Activated CD4-positive, alpha-beta T cell treated with anti-CD3 and anti-CD28 coated beads for 36 hours (primary cell): ENCODE measurements at regions of chr1 and their contacts with region 1.

Region 1: DNA sequence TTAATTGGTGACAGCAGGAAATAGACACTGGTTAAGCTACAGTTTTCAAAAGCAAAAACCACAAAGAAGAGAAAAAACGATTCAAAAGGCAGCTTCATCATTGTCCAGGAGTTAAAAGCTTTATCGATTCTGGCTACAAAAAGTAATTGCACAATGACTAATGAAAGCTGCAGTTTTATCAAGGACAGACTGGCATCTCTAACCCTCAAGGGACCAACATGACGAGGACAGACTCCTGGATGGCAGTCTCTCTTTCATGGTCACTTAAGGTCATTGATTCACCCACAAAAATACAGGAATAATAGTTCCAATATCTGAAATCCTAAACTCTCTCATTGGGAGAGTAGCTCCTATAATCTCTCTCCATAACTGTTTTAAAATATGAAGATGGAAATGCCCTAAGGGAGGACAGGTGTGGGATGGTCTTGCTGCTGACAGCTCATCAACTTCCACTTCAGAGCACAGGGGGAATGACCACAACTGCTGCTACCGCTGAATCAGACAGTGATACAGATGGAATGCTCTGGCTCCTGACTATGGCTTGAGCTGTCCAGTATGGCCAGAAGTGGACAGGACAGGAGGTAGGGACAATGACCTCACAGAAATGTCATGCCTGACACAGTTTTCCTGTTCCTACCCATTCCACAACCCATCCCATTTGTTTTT is 17.4 kb upstream of the CPLANE2 start:
- DNase-seq: no peak
- ATAC-seq: no peak
- H3K4me3 Mint-ChIP-seq: no peak overlapping the region
- H3K27ac Mint-ChIP-seq: no peak overlapping the region
- H3K4me1 Mint-ChIP-seq: peaks cover 12% of the 10 kb centered on the region
- H3K27me3 Mint-ChIP-seq: no peaks in the 10 kb centered on the region

Region 2: DNA sequence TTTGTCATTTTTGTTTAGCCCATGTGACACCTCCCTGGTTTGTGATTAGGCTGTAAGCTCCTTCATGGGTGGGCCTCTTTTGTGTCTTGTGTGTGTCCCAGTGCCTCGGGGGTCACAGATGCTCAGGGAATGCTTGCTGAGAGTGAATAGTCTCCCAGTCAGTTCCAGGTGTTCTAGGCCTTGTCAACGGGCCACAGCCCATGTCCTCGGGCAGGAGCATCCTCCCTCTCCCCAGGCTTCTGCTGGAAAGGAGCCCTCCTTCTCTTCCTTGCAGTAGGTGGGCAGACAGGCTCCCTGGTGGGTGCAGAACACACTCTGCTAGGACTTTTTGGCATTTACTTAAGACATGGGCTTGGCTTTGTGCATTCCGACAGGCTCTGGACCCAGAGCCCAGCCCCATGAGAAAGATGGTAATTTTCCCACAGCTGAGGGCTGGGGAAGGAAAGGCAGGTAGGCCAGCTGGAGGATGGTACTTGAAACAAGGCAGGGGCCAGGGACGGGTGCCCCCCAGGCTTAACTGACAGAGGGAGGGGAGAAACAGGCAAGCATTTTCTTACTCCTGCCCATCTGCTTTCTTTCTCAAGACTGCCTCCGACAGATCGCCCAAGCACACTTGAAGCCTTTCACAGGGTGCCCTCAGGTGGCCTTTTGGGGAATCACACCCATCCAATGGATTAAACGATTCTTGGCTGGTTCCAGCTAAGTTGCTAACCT is 10.3 kb before region 1 on chr1:
- CTCF ChIA-PET with region 1: interaction called, 14 read pairs
- POLR2A ChIA-PET with region 1: no interaction called
- intact Hi-C with region 1: no loop called
- DNase-seq: peak; percentile 87
- ATAC-seq: peak; percentile 79
- H3K4me3 Mint-ChIP-seq: no peak overlapping the region
- H3K27ac Mint-ChIP-seq: no peak overlapping the region
- H3K4me1 Mint-ChIP-seq: peaks cover 10% of the 10 kb centered on the region
- H3K27me3 Mint-ChIP-seq: no peaks in the 10 kb centered on the region